Posterior vena cava (tissue), 2 donors: ENCODE measurements at regions of chr15 and their contacts with region 1.

Region 1: GRCh38 chr15:74790073-74790916 is 8.4 kb downstream of the CSK start:
- DNase-seq: no peak

Region 2: DNA sequence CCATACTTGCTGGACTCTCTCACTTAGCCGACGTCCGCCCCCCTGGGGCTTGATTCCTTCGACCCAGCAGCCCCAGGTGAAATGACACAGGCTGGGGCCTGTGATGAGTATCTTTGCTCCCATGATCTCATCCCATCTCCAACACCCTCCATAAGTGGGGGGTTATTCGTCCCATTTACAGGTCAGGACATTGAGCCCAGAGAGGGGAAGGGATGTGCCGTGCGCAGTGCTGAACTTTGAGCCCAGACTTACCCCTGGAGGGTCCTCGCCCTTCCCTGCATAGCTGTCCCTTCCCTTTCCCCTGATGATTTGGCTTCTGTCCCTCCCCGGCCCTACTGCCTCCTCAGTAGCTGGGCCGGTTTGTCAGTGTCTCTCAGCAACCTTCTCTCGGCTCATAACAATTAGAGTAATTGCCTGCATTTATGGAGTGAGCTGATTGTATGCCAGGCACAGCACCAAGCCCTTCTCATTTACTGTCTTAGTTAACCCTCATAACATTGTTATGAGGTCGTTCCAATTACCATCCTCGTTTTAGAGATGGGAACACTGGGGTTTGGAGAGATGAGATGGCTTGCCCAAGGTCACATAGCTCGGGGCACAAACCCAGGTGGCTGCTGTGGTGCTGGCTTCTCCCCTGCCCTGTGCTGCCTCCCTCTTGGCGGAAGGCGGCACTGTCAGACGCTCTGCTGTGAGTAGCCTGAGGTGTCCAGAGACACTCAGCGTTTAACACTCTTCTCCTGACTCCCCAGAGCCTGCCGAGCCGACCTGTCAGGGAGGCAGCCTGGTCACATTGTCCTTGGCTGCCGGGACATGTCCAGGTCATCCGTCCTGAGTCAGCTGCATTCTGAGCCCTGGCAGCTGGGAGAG is 26.7 kb after region 1 on chr15:
- intact Hi-C with region 1: loop called in 1 of 2 experiments (anchors 1 kb)
- DNase-seq: no peak